Mammary epithelial cell (primary cell): ENCODE measurements at regions of chr20 and their contacts with region 1.

Region 1: DNA sequence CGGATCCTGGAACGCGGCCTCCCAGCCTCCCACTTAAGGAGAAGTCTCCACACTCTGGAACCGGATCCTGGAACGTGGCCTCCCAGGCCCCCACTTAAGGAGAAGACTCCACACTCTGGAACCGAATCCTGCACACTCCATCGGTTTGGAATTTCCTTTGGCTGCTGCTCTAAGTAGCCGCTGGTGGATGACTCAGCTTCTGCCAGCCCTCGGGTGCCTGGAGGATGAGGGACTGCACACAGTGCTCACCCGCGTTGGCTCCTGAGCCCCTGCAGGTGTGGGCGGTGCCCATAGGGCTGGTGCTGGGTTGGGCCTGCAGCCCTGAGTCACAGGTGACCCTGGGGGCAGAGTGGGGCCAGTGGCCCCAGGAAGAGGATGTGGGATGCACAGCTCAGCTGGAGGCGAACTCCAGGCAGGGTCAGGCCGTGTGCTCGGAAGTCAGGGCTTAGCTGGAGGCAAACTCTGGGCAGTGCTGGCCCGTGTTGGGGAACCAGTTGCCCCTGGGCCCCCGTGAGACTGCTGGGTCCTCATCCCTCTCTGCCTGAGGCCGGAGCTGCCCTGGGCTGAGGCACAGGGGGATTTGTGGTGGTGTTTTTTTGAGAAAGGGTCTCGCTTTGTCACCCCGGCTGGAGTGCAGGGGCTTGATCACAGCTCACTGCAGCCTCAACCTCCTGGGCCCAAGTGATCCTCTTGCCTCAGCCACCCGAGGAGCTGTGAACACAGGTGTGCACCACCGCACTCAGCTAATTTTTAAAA is 13.9 kb upstream of the TNFRSF6B start:
- DNase-seq: peak; percentile 99
- H3K4me3 ChIP-seq: no peak overlapping the region
- H3K27ac ChIP-seq: peak overlapping the region; percentile 36
- H3K4me1 ChIP-seq: peaks cover 31% of the 10 kb centered on the region
- H3K27me3 ChIP-seq: no peaks in the 10 kb centered on the region
- CTCF ChIP-seq: no peak

Region 2: GRCh38 chr20:63627129-63627750 is 55.3 kb before region 1 on chr20:
- CTCF ChIA-PET with region 1: no interaction called
- dilution Hi-C with region 1: no loop called
- in situ Hi-C with region 1: no loop called
- intact Hi-C with region 1: loop called (anchors 1 kb)
- DNase-seq: peak; percentile 94
- H3K4me3 ChIP-seq: peak overlapping the region; percentile 93 to 99 (median 97)
- H3K27ac ChIP-seq: peak overlapping the region; percentile 62
- H3K4me1 ChIP-seq: peaks cover 11% of the 10 kb centered on the region
- H3K27me3 ChIP-seq: no peaks in the 10 kb centered on the region
- CTCF ChIP-seq: no peak

Region 3: GRCh38 chr20:63657937-63658748 is 24.4 kb before region 1 on chr20 and contains the start of gene RTEL1:
- CTCF ChIA-PET with region 1: no interaction called
- dilution Hi-C with region 1: no loop called
- in situ Hi-C with region 1: no loop called
- intact Hi-C with region 1: loop called (anchors 2 kb)
- DNase-seq: peak; percentile 91
- H3K4me3 ChIP-seq: peak within 1 kb of the TSS; percentile 75 to 92 (median 92)
- H3K27ac ChIP-seq: peak within 1 kb of the TSS; percentile 47
- H3K4me1 ChIP-seq: peaks cover 20% of the 10 kb centered on the region
- H3K27me3 ChIP-seq: no peaks in the 10 kb centered on the region
- CTCF ChIP-seq: no peak
- total RNA-seq, gene RTEL1: 8.0 to 32.5 TPM

Region 4: DNA sequence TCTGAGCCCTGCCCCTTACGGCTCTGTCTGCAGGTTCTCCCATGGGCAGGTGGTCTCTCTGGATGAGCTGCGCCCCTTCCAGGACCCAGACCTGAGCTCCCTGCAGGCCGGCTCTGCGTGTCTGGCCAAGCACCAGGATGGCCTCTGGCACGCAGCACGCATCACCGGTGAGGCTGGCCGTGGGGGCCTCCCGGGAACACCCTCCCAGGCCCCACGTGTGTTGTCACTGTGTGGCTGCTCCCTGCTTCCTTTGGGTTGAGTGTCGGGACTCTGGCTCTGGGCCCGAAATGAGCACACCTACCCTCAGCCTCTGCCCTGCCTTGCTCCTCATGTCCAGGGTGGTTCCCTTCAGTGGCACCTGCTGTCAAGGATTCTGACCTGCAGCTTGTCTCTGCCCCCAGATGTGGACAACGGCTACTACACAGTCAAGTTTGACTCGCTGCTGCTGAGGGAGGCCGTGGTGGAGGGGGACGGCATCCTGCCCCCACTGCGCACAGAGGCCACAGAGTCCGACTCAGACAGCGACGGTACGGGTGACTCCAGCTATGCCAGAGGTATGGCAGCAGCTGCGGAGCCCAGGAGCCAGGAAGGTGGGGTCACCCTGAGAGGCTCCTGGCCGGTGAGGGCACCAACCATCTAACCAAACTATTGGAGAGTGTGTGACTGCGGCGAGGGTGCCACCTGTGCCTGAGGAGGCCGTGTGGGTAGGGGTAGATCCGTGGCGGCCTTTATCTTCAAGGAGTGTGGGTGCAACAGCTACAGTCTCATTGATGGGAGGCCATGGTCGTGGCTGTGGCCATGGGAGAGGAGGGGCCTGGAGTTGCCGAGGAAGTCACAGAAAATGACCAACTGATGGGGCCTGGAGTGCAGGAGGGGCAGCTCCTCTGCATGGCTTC is 50.9 kb after region 1 on chr20:
- CTCF ChIA-PET with region 1: no interaction called
- dilution Hi-C with region 1: no loop called
- in situ Hi-C with region 1: no loop called
- intact Hi-C with region 1: no loop called
- DNase-seq: no peak
- H3K4me3 ChIP-seq: no peak overlapping the region
- H3K27ac ChIP-seq: no peak overlapping the region
- H3K4me1 ChIP-seq: peaks cover 18% of the 10 kb centered on the region
- H3K27me3 ChIP-seq: no peaks in the 10 kb centered on the region
- CTCF ChIP-seq: no peak